ENCODE measurements at regions of chr13 and their contacts with region 1.

Region 1: GRCh38 chr13:29771247-29771646 is 79.2 kb downstream of the UBL3 start:
- DNase-seq: no peak
- H3K4me3 ChIP-seq: no peak overlapping the region
- H3K27ac ChIP-seq: no peak overlapping the region
- H3K27me3 ChIP-seq: no peaks in the 10 kb centered on the region
- CTCF ChIP-seq: peak; percentile 19

Region 2: GRCh38 chr13:29472332-29472961 is 298.8 kb before region 1 on chr13:
- in situ Hi-C with region 1: no loop called
- DNase-seq: peak; percentile 62
- H3K4me3 ChIP-seq: no peak overlapping the region
- H3K27ac ChIP-seq: no peak overlapping the region
- H3K27me3 ChIP-seq: no peaks in the 10 kb centered on the region
- CTCF ChIP-seq: peak; percentile 100

Region 3: DNA sequence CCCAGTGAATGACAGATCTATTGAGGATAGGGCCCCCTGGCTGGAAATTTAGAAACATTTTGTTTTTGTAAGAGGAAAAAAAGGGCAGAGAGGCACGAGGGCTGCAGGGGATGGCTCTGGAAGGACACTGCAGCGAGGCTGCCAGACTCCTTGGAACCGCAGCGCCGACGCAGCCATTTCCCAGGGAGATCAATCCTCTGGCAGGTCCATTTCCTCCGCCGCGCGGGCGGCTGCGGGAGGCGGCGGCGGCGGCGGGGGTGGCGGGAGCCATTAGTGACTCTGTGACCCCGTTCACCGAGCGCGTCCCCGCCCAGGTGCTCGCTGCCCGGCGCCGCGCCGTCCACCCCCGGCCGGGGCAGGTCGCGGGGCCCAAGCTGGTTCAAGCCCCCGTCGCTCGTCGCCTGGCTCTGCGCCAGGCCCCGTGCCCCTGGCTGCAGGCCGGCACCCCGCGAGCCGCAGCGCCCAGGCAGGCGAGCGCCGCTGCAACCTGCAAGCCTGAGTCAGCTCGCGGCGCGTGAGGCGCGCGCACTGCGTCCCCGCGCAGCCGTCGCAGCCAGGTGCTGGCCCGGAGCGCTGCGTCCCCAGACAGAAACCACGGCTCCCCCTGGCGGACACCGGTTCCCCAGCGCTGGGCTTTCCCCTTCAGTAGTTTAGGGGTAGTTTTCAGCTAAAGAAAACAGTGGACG is 343.5 kb after region 1 on chr13:
- in situ Hi-C with region 1: loop called (anchors 25 kb)
- DNase-seq: peak; percentile 68
- H3K4me3 ChIP-seq: peak overlapping the region; percentile 44
- H3K27ac ChIP-seq: no peak overlapping the region
- H3K27me3 ChIP-seq: peaks cover 1% of the 10 kb centered on the region
- CTCF ChIP-seq: peak; percentile 88

Measured in brain microvascular endothelial cell (primary cell).